Activated B cell treated with CpG ODN at 0.5 μM for 24 hours (primary cell): ENCODE measurements at regions of chr16 and their contacts with region 1.

Region 1: GRCh38 chr16:46689365-46690280 is at the start of gene ORC6:
- DNase-seq: peak; percentile 91
- ATAC-seq: peak; percentile 75
- H3K4me3 Mint-ChIP-seq: no peak within 1 kb of the TSS
- H3K27ac Mint-ChIP-seq: no peak within 1 kb of the TSS
- H3K4me1 Mint-ChIP-seq: peaks cover 32% of the 10 kb centered on the region
- H3K27me3 Mint-ChIP-seq: no peaks in the 10 kb centered on the region
- CTCF ChIP-seq: no peak
- total RNA-seq, gene ORC6: 8.0 and 13.2 TPM in 2 replicates

Region 2: GRCh38 chr16:46621006-46621933 is 68.4 kb before region 1 on chr16 and contains the start of gene SHCBP1:
- CTCF ChIA-PET with region 1: no interaction called
- POLR2A ChIA-PET with region 1: no interaction called
- intact Hi-C with region 1: loop called (anchors 2 kb)
- DNase-seq: peak; percentile 63
- ATAC-seq: peak; percentile 97
- H3K4me3 Mint-ChIP-seq: peak within 1 kb of the TSS; percentile 88
- H3K27ac Mint-ChIP-seq: peak within 1 kb of the TSS; percentile 37
- H3K4me1 Mint-ChIP-seq: peaks cover 24% of the 10 kb centered on the region
- H3K27me3 Mint-ChIP-seq: no peaks in the 10 kb centered on the region
- CTCF ChIP-seq: no peak
- total RNA-seq, gene SHCBP1: 1.9 and 2.0 TPM in 2 replicates

Region 3: DNA sequence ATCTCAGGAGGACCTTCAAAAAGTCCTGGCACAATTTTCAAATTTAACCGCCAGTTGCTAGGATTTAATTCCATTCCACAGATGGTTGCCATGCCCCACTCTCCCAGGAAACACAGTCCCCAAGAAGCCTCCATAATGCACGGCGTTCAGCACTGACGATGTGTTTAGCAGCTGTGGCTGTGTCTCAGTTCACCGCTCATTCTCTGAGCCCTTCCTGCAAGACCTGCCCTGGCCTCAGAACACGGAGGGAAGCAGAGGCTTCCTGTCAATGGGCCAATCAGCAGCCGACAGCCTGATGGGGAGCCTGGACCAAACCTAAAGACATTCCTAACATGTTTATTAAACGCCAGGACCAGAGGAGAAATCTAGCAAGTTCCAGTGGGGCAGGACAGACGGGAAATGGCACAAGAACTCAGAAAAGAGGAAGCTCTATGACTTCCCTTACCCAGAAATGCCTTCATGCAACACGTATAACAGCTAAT is 53.7 kb after region 1 on chr16:
- CTCF ChIA-PET with region 1: interaction called, 3 read pairs
- POLR2A ChIA-PET with region 1: no interaction called
- intact Hi-C with region 1: loop called (anchors 2 kb)
- DNase-seq: peak; percentile 38
- ATAC-seq: peak; percentile 82
- H3K4me3 Mint-ChIP-seq: peak overlapping the region; percentile 86
- H3K27ac Mint-ChIP-seq: peak overlapping the region; percentile 97
- H3K4me1 Mint-ChIP-seq: peaks cover 24% of the 10 kb centered on the region
- H3K27me3 Mint-ChIP-seq: no peaks in the 10 kb centered on the region
- CTCF ChIP-seq: no peak

Region 4: GRCh38 chr16:46830902-46831647 is 141.5 kb after region 1 on chr16 and contains the start of gene C16orf87:
- CTCF ChIA-PET with region 1: no interaction called
- POLR2A ChIA-PET with region 1: no interaction called
- intact Hi-C with region 1: loop called (anchors 1 kb)
- DNase-seq: peak; percentile 90
- ATAC-seq: peak; percentile 92
- H3K4me3 Mint-ChIP-seq: peak within 1 kb of the TSS; percentile 99
- H3K27ac Mint-ChIP-seq: peak within 1 kb of the TSS; percentile 95
- H3K4me1 Mint-ChIP-seq: peaks cover 68% of the 10 kb centered on the region
- H3K27me3 Mint-ChIP-seq: no peaks in the 10 kb centered on the region
- CTCF ChIP-seq: no peak
- total RNA-seq, gene C16orf87: 15.6 and 16.6 TPM in 2 replicates

Region 5: DNA sequence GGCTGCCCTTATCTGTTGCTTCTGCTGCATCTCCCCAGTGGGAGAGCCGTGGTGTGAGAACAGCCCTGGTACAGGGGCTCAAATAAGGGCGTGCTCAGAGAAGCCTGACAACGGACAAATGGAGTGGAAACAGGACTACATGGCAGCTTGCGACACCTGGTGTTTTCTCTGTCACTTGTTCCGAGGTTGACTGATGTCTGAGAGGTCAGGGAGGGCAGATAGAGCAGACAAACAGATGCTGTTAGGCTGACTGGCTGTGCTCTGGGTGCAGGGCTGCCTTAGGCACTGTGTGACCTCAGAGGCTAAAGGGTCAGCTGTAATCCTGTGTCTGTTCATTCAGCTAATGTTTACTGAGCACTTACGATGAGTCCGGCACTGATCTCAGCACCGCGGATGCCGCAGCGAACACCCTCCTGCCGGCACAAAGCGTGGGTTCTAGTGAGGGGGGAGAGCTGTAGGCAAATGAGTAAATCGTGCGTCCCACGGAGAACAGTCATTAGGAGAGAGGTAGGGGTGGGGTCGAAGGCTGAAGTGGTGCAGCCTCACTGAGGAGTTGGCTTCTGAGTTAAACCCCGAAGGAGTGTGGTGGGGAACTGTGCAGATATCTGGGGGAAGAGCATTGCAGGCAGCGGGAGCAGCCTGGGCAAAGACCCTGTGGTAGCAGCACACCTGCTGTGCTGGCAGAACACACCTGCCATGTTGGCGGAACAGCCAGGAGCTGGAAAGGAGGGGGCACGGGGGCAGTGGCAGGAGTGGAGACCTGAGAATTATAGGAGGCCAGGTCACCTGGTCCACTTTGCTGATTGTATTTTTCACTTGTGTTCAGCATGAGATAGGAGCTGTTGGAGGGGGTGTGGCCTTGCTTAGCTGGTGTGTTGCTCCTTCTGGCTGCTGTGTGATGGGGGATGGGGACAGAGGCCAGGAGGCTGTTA is 229.5 kb after region 1 on chr16:
- CTCF ChIA-PET with region 1: no interaction called
- POLR2A ChIA-PET with region 1: no interaction called
- intact Hi-C with region 1: loop called (anchors 1 kb)
- DNase-seq: peak; percentile 34
- ATAC-seq: peak; percentile 60
- H3K4me3 Mint-ChIP-seq: peak overlapping the region; percentile 75
- H3K27ac Mint-ChIP-seq: peak overlapping the region; percentile 80
- H3K4me1 Mint-ChIP-seq: peaks cover 69% of the 10 kb centered on the region
- H3K27me3 Mint-ChIP-seq: no peaks in the 10 kb centered on the region
- CTCF ChIP-seq: no peak

Region 6: GRCh38 chr16:47460711-47461597 is 771.3 kb after region 1 on chr16 and contains the starts of genes ITFG1 and PHKB:
- CTCF ChIA-PET with region 1: no interaction called
- POLR2A ChIA-PET with region 1: no interaction called
- intact Hi-C with region 1: loop called (anchors 10 kb)
- DNase-seq: peak; percentile 95
- ATAC-seq: peak; percentile 90
- H3K4me3 Mint-ChIP-seq: peak within 1 kb of the TSS; percentile 98
- H3K27ac Mint-ChIP-seq: peak within 1 kb of the TSS; percentile 96
- H3K4me1 Mint-ChIP-seq: peaks cover 68% of the 10 kb centered on the region
- H3K27me3 Mint-ChIP-seq: no peaks in the 10 kb centered on the region
- CTCF ChIP-seq: no peak
- total RNA-seq, gene ITFG1: 23.8 and 30.9 TPM in 2 replicates
- total RNA-seq, gene PHKB: 94.8 and 110 TPM in 2 replicates